PC-9 (cell line): ENCODE measurements at regions of chr15 and their contacts with region 1.

Region 1: DNA sequence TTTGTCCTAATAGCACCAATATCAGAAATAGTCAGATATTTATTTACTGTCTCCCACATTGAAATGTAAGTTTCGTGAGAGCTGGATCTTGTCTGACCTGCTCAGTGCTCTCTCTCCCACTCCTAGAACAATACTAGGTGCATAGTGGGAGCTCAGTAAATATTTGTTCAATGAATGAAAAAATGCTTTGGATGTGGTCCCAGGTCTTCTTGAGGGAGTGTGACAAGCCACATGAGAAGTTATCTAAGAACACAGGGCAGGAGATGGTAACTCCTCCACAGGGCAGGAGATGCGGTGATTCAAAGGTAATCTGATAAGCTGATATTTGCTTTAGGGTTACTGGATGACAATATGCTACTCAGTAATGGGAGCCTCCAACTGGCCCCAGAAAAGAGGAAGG is 25.7 kb upstream of the PLA2G4E start:
- DNase-seq: peak; percentile 35 to 95
- H3K4me3 ChIP-seq: no peak overlapping the region
- H3K27ac ChIP-seq: peak overlapping the region; percentile 74
- H3K4me1 ChIP-seq: peaks cover 35% of the 10 kb centered on the region
- H3K27me3 ChIP-seq: no peaks in the 10 kb centered on the region
- CTCF ChIP-seq: no peak

Region 2: GRCh38 chr15:43127752-43128151 is 1081.2 kb after region 1 on chr15:
- CTCF ChIA-PET with region 1: no interaction called
- POLR2A ChIA-PET with region 1: interaction called, 10 read pairs
- intact Hi-C with region 1: no loop called
- DNase-seq: peak in 1 of 2 experiments; percentile 34
- H3K4me3 ChIP-seq: no peak overlapping the region
- H3K27ac ChIP-seq: no peak overlapping the region
- H3K4me1 ChIP-seq: peaks cover 7% of the 10 kb centered on the region; the same call in 1 of the 2 replicates
- H3K27me3 ChIP-seq: no peaks in the 10 kb centered on the region
- CTCF ChIP-seq: no peak